Gastrocnemius medialis (tissue), 4 donors: ENCODE measurements at regions of chr5 and their contacts with region 1.

Region 1: DNA sequence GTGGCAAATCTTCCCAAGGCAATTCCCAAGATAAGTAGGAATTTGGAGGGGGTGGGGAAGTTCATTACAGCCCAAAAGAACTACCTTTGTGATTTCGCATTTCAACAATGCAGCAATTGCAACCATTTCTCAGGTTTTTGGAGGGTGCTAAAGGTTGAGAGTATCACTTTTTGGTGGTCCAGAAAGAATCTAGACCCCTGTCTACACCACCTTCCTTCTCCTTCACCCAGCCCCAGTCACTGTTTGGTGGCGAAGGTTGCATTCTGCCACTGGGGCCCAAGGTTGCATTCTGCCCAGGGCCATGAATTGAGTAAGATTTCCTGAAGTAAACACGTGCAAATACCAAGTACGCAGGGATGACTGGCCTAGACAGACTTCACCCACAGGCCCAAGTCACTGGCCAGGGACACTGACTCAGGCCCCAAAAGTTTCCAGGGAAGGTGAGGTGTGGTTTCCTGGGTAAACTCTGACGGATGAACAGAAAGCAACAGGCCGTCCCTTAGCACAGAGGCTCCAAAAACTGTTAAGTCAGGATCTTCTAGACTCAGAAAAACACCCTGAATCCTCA is 5.7 kb downstream of the PDE6A start:
- DNase-seq: peak in 1 of 2 donors; percentile 27
- ATAC-seq: peak; percentile 59 to 73
- H3K4me3 ChIP-seq: no peak overlapping the region
- H3K27ac ChIP-seq: peak overlapping the region in 2 of 4 donors; percentile 31 to 41
- H3K4me1 ChIP-seq: peaks cover 0 to 11% of the 10 kb centered on the region in 2 donors
- H3K27me3 ChIP-seq: no peaks in the 10 kb centered on the region
- CTCF ChIP-seq: no peak
- POLR2A ChIP-seq: no peak

Region 2: DNA sequence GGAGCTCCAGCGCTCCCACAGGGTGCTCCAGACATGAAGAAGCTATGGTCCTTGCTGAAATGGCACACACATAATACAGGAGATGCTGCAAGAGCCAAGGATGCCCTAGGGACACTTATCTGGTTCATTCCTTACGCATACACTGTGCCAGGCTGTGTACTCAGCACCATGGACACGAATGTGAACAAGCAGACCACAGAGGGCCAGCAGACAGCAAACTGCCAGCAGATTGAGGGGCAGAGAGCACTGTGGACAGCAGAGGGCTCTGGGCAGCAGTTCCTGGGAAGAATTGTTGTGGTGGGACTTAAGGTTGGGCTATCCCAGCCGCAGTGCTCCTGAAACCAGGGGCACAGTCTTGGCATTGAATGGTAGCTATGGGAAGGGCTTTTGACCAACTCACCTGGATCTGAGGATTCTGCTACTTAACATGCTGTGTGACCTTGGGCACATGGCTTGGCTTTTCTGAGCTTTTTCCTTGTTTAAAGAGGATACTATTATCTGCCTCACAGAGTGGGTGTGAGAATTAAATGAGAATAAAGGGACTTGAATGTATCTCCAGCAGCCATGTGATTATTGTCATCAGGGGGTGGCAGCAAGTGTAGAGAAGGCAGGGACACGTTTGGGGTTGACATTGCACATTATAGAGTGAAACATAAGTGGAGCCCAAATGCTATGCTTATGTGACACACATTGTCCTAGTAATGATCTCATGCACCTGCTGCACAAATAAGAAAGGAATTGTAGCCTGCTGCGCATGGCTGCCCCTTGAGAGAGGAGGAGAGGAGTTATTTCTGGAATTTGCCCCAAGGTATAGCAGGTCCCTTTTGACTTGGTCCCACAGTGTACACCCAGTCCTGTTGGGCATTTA is 178.7 kb before region 1 on chr5:
- in situ Hi-C with region 1: no loop called
- intact Hi-C with region 1: no loop called
- DNase-seq: no peak
- ATAC-seq: peak in 1 of 2 donors; percentile 15
- H3K4me3 ChIP-seq: no peak overlapping the region
- H3K27ac ChIP-seq: peak overlapping the region in 2 of 4 donors; percentile 4 to 41
- H3K4me1 ChIP-seq: peaks cover 41% of the 10 kb centered on the region in 2 donors
- H3K27me3 ChIP-seq: no peaks in the 10 kb centered on the region
- CTCF ChIP-seq: peak in 1 of 5 experiments; percentile 18
- POLR2A ChIP-seq: no peak

Region 3: DNA sequence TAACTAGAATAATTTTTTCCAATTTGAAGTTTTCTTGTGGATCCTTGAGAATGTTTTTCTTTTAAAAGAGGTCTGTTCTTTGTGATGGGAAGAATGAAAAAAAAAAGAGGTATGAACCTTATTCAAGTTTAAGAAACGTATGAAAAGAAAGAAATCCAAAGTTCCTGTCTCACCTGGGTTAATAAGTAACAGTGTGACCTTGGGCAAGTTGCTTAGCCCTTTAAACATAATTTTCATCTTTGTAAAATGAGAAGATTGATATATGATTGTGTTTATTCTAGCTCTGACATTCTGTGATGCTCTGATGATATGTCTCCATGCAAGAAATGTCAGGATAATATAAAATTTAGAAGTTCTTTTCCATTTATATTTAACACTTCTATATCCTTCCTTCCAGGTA is 41.0 kb after region 1 on chr5:
- in situ Hi-C with region 1: no loop called
- intact Hi-C with region 1: loop called (anchors 5 kb)
- DNase-seq: no peak
- ATAC-seq: no peak
- H3K4me3 ChIP-seq: no peak overlapping the region
- H3K27ac ChIP-seq: no peak overlapping the region
- H3K4me1 ChIP-seq: no peaks in the 10 kb centered on the region
- H3K27me3 ChIP-seq: no peaks in the 10 kb centered on the region
- CTCF ChIP-seq: no peak
- POLR2A ChIP-seq: no peak

Region 4: DNA sequence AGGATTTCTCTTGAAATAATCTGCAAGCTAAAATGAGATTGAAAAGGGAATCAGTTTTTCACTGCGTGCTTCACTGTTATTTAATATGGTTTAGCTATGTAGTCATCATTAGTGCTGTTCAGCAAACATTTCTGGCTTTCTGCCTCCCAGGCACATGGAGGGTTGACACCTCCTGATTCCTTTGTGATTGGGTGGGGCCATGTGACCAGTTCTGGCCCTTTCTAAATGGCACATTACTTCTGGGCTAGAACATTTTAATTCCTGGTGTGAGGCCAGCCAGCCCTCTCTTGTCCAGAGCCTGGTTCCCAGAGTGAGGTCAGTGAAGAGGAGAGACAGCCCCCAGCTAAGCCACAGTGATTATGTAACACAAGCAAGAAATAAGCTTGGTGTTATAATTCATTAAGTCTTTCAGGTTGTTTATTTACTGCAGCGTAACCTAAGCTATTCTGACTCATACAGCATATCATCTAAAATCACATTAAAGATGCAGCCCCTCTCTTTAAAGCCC is 381.2 kb after region 1 on chr5:
- in situ Hi-C with region 1: no loop called
- intact Hi-C with region 1: no loop called
- DNase-seq: peak; percentile 71 to 73
- ATAC-seq: peak; percentile 82 to 92
- H3K4me3 ChIP-seq: no peak overlapping the region
- H3K27ac ChIP-seq: peak overlapping the region; percentile 24 to 66 (median 41)
- H3K4me1 ChIP-seq: peaks cover 0 to 9% of the 10 kb centered on the region in 2 donors
- H3K27me3 ChIP-seq: no peaks in the 10 kb centered on the region
- CTCF ChIP-seq: no peak
- POLR2A ChIP-seq: no peak